ENCODE measurements at regions of chr16 and their contacts with region 1.

Region 1: DNA sequence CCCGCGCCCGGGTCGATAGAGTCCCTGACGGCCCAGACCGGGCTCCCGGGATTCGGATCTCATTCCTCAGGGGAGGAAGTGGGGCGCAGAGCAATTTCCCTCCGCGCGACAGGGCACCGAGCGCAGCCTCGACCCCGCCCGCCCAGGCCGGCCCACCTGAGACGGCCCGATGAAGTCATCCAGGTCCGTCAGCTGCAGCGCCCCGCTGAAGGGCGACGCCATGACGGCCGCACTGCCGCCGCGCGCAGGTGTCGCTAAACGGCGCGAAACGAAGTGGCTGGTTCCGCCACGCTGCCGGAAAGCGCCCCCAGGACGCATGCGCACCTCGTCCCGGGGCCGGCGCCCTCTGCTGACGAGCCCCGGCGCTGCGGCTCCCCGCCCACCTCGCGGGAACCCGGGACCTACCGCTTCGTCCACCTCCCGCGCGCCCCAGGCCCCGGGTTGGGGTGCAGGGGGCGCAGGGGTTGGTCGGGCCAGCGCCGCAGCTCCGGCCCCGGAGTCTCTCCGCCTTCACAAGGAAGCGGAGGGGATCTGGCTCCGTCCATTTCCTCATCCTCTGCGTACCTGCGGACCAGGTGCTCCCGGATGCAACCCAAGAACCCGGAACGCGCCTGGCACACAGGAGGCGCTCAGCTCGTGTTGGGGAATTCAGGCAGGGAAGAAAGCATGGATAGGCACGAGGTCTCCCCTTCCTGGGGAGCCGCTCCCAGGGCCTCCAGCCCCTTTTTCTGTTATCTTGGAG is at the start of gene CIAO3:
- DNase-seq: peak; percentile 99
- H3K4me3 ChIP-seq: peak within 1 kb of the TSS; percentile 85 to 87
- H3K27ac ChIP-seq: peak within 1 kb of the TSS in 1 of 2 experiments; percentile 24; a peak in 1 of 4 replicates
- H3K4me1 ChIP-seq: peaks cover 0 to 10% of the 10 kb centered on the region in 2 experiments; a peak in 1 of 4 replicates
- H3K27me3 ChIP-seq: no peaks in the 10 kb centered on the region
- CTCF ChIP-seq: peak; percentile 74
- EP300 ChIP-seq: no peak
- RAD21 ChIP-seq: no peak; the same call in 1 of the 2 replicates
- polyA plus RNA-seq, gene CIAO3: 14.4 TPM in 2 replicates

Region 2: DNA sequence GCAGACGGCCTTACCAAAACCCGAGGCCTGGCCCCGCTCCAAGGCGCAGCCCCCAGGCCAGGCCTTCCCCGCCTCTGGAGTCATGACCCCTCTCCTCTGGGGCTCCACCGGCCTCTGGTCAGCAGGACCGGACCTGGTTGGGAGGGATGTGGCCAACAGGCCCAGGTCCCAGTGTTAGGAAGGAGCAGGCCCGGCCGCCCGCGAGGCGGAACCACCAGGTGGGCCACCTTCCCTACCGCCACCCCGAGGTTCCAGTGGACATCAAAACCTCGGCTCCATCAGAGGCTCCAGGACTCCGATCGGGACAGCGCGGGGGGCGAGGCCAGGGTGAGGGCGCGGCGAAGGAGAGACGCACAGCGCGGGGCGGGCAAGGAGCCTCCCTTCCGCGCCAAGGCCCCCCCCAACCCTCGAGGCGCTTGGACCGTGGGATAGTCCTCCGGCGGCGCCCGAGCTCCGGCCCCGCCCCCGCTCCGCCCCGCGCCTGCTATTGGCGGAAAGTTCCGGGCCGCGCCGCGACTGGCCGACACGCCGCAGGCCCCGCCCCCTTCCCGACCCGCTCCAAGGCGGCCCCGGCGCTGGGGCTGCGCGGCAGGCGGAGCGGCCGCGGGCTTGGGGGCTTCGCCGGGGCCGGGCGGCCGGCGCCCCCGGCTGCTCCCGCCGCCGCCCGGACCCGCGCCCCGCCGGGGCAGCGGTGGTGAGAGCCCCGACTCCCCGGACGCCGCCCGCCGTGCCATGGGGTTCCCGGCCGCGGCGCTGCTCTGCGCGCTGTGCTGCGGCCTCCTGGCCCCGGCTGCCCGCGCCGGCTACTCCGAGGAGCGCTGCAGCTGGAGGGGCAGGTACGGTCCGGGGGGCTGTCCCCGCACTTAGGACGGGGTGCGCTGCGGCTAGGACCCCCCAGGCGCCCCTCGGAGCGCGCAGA is 26.1 kb before region 1 on chr16 and contains the start of gene METRN:
- CTCF ChIA-PET with region 1: interaction called, 358 read pairs
- POLR2A ChIA-PET with region 1: interaction called, 7 read pairs
- DNase-seq: peak; percentile 92
- H3K4me3 ChIP-seq: peak within 1 kb of the TSS; percentile 66 to 70
- H3K27ac ChIP-seq: peak within 1 kb of the TSS; percentile 56 to 91; a peak in 3 of 4 replicates
- H3K4me1 ChIP-seq: peaks cover 23 to 51% of the 10 kb centered on the region in 2 experiments; a peak in 3 of 4 replicates
- H3K27me3 ChIP-seq: no peaks in the 10 kb centered on the region
- CTCF ChIP-seq: no peak
- EP300 ChIP-seq: no peak
- RAD21 ChIP-seq: no peak
- polyA plus RNA-seq, gene METRN: 52.4 and 59.7 TPM in 2 replicates

Region 3: DNA sequence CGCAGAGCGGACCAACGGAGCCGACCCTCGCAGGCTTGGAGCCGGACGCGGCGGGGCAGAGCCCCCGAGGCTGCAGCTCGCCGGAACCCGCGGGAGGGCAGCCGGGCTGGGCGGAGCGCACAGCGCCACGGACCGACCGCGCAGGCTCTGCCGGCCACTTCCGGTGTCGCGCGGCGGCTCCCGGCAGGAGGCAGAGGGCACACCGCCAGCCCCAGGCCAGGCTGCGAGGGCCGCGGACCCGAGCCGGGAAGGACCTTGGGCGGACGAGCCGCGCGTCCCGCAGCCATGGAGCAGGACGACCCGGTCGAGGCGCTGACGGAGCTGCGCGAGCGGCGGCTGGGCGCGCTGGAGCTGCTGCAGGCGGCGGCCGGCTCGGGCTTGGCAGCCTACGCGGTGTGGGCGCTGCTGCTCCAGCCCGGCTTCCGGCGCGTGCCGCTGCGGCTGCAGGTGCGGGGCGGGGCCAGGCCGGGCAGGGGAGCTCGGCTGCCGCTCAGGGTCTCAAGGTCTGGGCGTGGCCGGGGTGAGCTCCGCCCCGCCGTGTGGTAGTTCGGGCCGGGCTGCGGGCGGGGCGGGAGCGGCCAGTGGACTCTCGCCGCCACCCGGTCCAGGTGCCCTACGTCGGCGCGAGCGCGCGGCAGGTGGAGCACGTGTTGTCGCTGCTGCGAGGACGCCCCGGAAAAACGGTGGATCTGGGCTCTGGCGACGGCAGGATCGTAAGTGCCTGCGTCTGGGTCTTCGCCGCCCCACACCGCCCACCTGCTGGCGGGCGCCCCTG is 19.8 kb before region 1 on chr16 and contains the start of gene ANTKMT:
- CTCF ChIA-PET with region 1: interaction called, 358 read pairs
- POLR2A ChIA-PET with region 1: interaction called, 7 read pairs
- DNase-seq: peak; percentile 92
- H3K4me3 ChIP-seq: peak within 1 kb of the TSS; percentile 86 to 89
- H3K27ac ChIP-seq: peak within 1 kb of the TSS; percentile 91 to 99
- H3K4me1 ChIP-seq: peaks cover 8 to 43% of the 10 kb centered on the region in 2 experiments; a peak in 3 of 4 replicates
- H3K27me3 ChIP-seq: no peaks in the 10 kb centered on the region
- CTCF ChIP-seq: no peak
- EP300 ChIP-seq: no peak
- RAD21 ChIP-seq: no peak
- polyA plus RNA-seq, gene ANTKMT: 49.5 and 57.4 TPM in 2 replicates

Region 4: GRCh38 chr16:728131-728889 is 12.6 kb before region 1 on chr16:
- CTCF ChIA-PET with region 1: interaction called, 358 read pairs
- POLR2A ChIA-PET with region 1: interaction called, 3 read pairs
- DNase-seq: peak; percentile 96
- H3K4me3 ChIP-seq: peak overlapping the region; percentile 29 to 78; a peak in 3 of 4 replicates
- H3K27ac ChIP-seq: peak overlapping the region in 1 of 2 experiments; percentile 89; a peak in 2 of 4 replicates
- H3K4me1 ChIP-seq: peaks cover 0 to 14% of the 10 kb centered on the region in 2 experiments; a peak in 1 of 4 replicates
- H3K27me3 ChIP-seq: no peaks in the 10 kb centered on the region
- CTCF ChIP-seq: no peak
- EP300 ChIP-seq: no peak
- RAD21 ChIP-seq: no peak

Region 5: DNA sequence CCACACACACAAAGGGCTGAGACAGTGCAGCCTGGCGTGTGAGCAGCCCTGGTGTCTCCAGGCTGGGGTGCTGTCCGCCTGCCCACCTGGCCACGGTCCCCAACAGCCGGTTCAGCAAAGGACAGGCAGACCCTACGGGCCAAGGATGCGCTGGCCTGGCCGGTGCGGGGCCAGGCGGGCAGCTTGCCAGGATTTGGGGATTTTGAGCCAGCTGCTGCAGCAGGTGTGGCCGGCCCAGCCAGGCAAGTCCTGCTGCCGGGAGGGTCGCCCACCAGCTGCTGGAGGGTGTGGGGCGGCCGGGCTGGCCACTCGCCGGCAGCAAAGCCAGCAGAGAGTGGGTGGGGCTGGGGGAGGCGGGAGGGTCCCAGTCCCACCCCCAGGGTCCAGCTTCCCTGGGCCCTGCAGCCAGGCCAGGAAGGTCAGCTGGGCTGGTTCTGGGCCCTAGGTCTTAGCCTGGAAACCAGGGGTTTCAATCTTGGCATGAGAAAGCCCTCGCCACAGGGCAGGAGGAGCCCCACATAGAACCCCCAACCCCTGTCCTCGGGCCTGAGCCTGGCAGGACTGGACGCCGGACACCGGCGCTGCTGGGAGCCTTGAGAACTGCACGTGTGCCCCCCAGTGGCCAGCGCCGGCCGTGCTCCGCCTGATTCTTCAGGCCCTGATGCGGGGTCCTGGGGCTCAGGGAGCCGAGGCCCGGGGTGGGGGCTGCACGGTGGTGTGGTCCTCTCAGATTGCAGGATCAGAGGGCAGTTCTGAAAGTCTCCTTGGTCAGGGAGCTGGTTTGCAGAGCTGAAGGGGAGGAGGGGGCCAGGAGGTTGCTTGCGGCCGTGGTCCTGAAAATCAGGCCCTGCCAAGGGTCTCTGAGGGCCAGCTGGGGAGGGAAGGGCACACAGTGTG is 314.0 kb after region 1 on chr16:
- CTCF ChIA-PET with region 1: interaction called, 23 read pairs
- POLR2A ChIA-PET with region 1: no interaction called
- DNase-seq: peak; percentile 91
- H3K4me3 ChIP-seq: peak overlapping the region in 1 of 2 experiments; percentile 46; a peak in 1 of 4 replicates
- H3K27ac ChIP-seq: no peak overlapping the region
- H3K4me1 ChIP-seq: no peaks in the 10 kb centered on the region; a peak in 1 of 4 replicates
- H3K27me3 ChIP-seq: peaks cover 26% of the 10 kb centered on the region
- CTCF ChIP-seq: peak; percentile 78
- EP300 ChIP-seq: no peak
- RAD21 ChIP-seq: peak; percentile 83

Measured in SK-N-SH (cell line).